Aorta (tissue), 5 donors: ENCODE measurements at regions of chr1 and their contacts with region 1.

Region 1: DNA sequence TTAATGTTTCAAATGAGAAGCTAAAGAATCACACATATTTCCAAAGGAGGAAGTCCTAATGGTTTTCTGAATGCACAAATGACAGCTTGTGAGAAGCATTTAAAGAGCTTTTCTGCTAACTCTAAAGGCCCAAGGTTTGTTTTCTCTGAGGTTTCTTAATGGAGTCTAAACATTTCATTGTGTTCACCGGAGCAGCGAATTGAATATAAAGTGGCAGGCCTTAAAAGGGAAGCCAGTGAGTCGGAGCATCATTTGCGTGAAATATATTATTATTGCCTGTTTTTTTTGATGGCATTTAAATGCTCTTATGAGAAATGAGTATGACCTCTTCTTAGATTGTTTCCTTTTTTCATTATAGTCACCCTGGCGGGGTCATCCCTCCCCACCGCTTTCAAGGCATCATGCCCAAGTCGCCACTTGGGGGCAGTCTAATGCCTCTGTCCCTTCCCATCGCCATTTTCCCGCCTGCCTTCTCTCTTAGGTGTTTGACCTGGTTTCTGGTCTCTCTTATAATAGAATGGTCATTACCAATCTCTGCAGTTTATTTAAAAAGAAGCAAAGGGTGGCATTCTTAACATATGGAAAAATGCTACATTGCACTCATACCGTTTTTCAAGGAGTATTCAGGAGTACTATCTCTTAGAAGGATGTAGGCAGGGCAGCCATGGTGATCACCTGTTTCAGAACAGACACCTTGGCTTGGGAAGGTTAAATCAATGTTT is 25.3 kb upstream of the OVAAL start:
- DNase-seq: peak; percentile 74 to 87
- ATAC-seq: peak; percentile 80
- H3K4me3 ChIP-seq: no peak overlapping the region
- H3K27ac ChIP-seq: no peak overlapping the region
- H3K4me1 ChIP-seq: peaks cover 3% of the 10 kb centered on the region in 2 donors
- H3K27me3 ChIP-seq: no peaks in the 10 kb centered on the region

Region 2: GRCh38 chr1:180778782-180779398 is 245.5 kb after region 1 on chr1:
- intact Hi-C with region 1: no loop called
- DNase-seq: no peak
- ATAC-seq: no peak
- H3K4me3 ChIP-seq: no peak overlapping the region
- H3K27ac ChIP-seq: no peak overlapping the region
- H3K4me1 ChIP-seq: no peaks in the 10 kb centered on the region
- H3K27me3 ChIP-seq: no peaks in the 10 kb centered on the region

Region 3: DNA sequence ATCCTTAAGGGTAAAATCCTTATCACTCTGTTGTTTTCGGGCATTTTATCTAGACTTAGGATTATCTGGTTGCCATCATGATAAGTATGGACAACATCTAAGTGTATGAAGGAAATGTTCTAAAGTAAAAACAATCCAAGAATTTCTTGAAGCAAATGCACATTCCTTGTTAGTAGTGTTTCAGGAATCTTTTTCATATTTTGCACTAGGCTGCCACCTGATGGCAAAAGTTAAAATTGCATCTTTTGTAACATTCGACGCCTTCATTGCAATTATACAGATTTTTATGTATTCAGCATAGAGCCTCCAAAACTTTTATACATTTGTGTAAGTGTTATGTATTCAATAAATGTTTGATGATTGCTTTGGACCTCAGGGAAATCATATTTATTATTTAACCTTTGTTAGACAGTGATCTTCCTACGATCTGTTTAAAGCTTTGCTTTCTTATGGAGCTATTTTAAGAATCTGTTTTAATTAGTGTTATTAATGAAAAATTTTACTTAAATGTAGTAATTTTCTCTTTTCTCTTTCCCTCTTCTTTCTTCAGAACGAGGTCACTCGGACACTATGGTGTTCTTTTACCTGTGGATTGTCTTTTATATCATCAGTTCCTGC is 329.8 kb after region 1 on chr1:
- intact Hi-C with region 1: loop called in 1 of 2 experiments (anchors 5 kb)
- DNase-seq: no peak
- ATAC-seq: no peak
- H3K4me3 ChIP-seq: no peak overlapping the region
- H3K27ac ChIP-seq: no peak overlapping the region
- H3K4me1 ChIP-seq: no peaks in the 10 kb centered on the region
- H3K27me3 ChIP-seq: no peaks in the 10 kb centered on the region

Region 4: DNA sequence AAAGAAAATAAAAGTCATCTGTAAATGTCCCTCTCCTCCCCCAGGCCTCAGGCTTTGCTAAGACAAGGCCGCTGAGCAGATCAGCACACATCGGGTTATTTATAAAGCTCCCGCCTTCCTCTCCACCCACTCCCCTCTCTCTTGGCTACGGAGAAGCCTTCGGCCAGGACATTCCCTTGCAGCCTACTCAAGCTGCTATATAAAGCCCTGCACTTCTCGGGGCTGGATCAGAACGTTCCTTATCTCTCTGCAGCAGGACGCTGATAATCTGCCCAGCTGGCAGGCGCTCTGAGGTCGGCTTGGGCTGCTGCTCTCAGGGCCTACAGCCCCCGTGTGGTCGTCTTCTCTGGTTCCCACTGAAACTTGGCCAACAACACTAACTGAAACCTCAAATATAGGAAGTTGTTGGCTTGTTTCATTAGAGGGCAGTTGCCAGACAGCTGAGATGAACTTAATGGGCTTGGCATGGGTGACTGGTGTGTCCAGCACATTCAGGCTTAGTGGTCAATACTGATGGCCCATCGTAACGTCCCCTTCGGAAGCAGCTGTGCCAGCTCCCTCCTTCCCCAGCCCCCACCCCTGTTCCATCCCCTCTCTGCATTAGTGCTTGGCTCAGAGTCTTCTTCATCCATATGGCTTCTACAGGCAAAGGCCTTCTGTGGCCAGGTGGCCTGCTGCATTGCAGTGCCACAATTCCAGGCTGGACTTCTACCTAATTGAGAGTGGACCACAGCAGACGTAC is 619.6 kb after region 1 on chr1:
- intact Hi-C with region 1: loop called (anchors 10 kb)
- DNase-seq: peak; percentile 87 to 92
- ATAC-seq: peak; percentile 95
- H3K4me3 ChIP-seq: no peak overlapping the region
- H3K27ac ChIP-seq: peak overlapping the region; percentile 73 to 98
- H3K4me1 ChIP-seq: peaks cover 0 to 6% of the 10 kb centered on the region in 2 donors
- H3K27me3 ChIP-seq: no peaks in the 10 kb centered on the region